Left ventricle myocardium inferior (tissue), 1 donor: ENCODE measurements at regions of chr9 and their contacts with region 1.

Region 1: DNA sequence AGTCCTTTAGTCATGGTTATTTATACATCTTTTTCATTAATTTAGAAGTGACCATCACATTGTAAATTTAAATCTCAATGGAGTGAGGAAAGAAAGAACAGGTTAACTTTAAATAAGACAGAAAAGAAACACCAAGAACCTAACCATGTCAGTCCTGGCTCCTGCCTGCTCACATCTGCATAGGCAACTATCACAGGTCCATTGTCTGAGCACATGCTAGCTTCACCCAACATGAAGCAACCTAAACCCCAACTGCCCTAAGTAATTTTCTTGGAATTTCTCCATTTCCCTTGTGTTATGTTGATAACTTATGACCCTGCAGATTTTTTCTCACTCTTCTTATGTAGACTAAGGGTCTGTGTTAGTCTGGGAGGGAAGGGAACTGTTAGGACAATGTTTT is 2205.9 kb upstream of the ACO1 start:
- DNase-seq: no peak
- H3K4me3 ChIP-seq: no peak overlapping the region
- H3K27ac ChIP-seq: no peak overlapping the region
- H3K4me1 ChIP-seq: no peaks in the 10 kb centered on the region
- H3K27me3 ChIP-seq: no peaks in the 10 kb centered on the region
- CTCF ChIP-seq: no peak

Region 2: GRCh38 chr9:30125881-30126280 is 52.7 kb before region 1 on chr9:
- intact Hi-C with region 1: loop called (anchors 5 kb)
- DNase-seq: no peak
- H3K4me3 ChIP-seq: no peak overlapping the region
- H3K27ac ChIP-seq: no peak overlapping the region
- H3K4me1 ChIP-seq: no peaks in the 10 kb centered on the region
- H3K27me3 ChIP-seq: no peaks in the 10 kb centered on the region
- CTCF ChIP-seq: no peak

Region 3: GRCh38 chr9:30670805-30671562 is 492.4 kb after region 1 on chr9:
- intact Hi-C with region 1: no loop called
- DNase-seq: no peak
- H3K4me3 ChIP-seq: no peak overlapping the region
- H3K27ac ChIP-seq: no peak overlapping the region
- H3K4me1 ChIP-seq: no peaks in the 10 kb centered on the region
- H3K27me3 ChIP-seq: no peaks in the 10 kb centered on the region
- CTCF ChIP-seq: no peak